ENCODE measurements at regions of chr12 and their contacts with region 1.

Region 1: GRCh38 chr12:43338848-43339526 is 213.0 kb downstream of the ADAMTS20 start:
- DNase-seq: peak; percentile 86
- H3K4me3 ChIP-seq: no peak overlapping the region
- H3K27ac ChIP-seq: peak overlapping the region; percentile 11
- H3K4me1 ChIP-seq: peaks cover 24% of the 10 kb centered on the region
- H3K27me3 ChIP-seq: no peaks in the 10 kb centered on the region
- CTCF ChIP-seq: peak; percentile 40 to 68
- POLR2A ChIP-seq: no peak

Region 2: DNA sequence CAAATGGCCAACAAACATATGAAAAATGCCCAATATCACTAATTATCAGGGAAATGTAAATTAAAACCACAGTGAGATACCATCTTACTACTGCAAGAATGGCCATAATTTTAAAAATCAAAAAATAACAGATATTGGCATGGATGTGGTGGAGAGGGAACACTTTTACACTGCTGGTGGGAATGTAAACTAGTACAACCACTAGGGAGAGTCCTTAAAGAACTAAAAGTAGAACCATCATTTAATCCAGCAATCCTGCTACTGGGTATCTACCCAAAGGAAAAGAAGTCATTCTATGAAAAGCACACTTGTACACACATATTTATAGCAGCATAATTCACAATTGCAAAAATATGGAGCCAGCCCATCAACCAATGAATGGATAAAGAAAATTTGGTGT is 1654.0 kb before region 1 on chr12:
- CTCF ChIA-PET with region 1: no interaction called
- POLR2A ChIA-PET with region 1: no interaction called
- dilution Hi-C with region 1: no loop called
- intact Hi-C with region 1: loop called (anchors 5 kb)
- DNase-seq: no peak
- H3K4me3 ChIP-seq: no peak overlapping the region
- H3K27ac ChIP-seq: no peak overlapping the region
- H3K4me1 ChIP-seq: no peaks in the 10 kb centered on the region
- H3K27me3 ChIP-seq: peaks cover 0 to 7% of the 10 kb centered on the region in 2 experiments
- CTCF ChIP-seq: no peak
- POLR2A ChIP-seq: no peak

Region 3: GRCh38 chr12:42237052-42237852 is 1101.7 kb before region 1 on chr12:
- CTCF ChIA-PET with region 1: no interaction called
- POLR2A ChIA-PET with region 1: no interaction called
- dilution Hi-C with region 1: no loop called
- intact Hi-C with region 1: loop called (anchors 5 kb)
- DNase-seq: peak; percentile 68
- H3K4me3 ChIP-seq: peak overlapping the region; percentile 39 to 98 (median 70)
- H3K27ac ChIP-seq: peak overlapping the region; percentile 41
- H3K4me1 ChIP-seq: peaks cover 13% of the 10 kb centered on the region
- H3K27me3 ChIP-seq: no peaks in the 10 kb centered on the region
- CTCF ChIP-seq: peak; percentile 29 to 53
- POLR2A ChIP-seq: no peak

Region 4: GRCh38 chr12:42332301-42333285 is 1006.4 kb before region 1 on chr12:
- CTCF ChIA-PET with region 1: interaction called, 7 read pairs
- POLR2A ChIA-PET with region 1: no interaction called
- dilution Hi-C with region 1: no loop called
- intact Hi-C with region 1: loop called (anchors 10 kb)
- DNase-seq: peak; percentile 67
- H3K4me3 ChIP-seq: no peak overlapping the region
- H3K27ac ChIP-seq: no peak overlapping the region
- H3K4me1 ChIP-seq: peaks cover 6% of the 10 kb centered on the region
- H3K27me3 ChIP-seq: no peaks in the 10 kb centered on the region
- CTCF ChIP-seq: peak; percentile 33 to 53
- POLR2A ChIP-seq: no peak

Region 5: DNA sequence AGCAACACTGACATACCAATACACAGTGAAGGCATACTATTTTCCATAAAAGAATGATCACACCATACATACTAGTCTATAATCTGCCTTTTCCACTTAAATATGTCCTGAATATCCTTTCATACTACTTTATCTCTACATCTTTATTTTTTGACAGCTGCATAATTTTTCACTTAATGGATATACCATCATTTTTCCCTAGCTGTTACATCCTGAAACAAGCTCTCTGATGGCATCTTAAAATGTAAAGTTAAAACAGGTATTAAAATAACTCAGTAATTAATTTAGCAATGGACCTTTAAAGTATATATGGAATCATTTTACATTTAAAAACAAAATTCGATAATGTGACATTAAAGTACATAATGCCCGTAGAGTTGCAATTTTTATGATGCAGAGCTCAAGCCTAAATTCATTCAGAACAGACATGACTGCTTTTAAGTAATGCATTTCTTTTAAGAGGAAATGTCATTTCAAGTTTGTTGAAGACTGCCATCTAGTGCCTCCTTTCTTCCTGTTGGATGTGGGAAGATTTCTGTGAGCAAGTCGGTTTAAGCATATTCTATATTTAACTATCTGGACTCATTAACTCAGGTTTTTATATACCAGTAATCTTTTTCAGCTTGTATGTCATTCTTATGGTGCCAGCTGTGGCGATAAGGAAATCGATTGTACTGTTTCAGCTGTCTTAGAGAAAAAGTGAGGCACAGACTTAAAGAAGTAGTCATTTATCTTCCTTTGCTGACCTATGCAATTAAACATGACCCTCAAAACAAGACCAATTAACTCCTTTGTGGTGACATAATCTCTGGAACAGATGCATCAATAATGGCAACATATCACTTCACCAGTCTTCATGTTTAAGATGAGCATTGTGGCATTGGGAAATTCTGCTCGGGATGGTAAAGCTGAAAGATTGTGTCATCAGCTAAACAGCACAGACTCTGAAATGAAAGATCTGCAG is 769.8 kb before region 1 on chr12:
- CTCF ChIA-PET with region 1: interaction called, 16 read pairs
- POLR2A ChIA-PET with region 1: no interaction called
- dilution Hi-C with region 1: no loop called
- intact Hi-C with region 1: loop called (anchors 5 kb)
- DNase-seq: peak; percentile 72
- H3K4me3 ChIP-seq: no peak overlapping the region
- H3K27ac ChIP-seq: no peak overlapping the region
- H3K4me1 ChIP-seq: peaks cover 33% of the 10 kb centered on the region
- H3K27me3 ChIP-seq: no peaks in the 10 kb centered on the region
- CTCF ChIP-seq: peak; percentile 29 to 35
- POLR2A ChIP-seq: no peak

Region 6: GRCh38 chr12:42790761-42791151 is 548.2 kb before region 1 on chr12:
- CTCF ChIA-PET with region 1: interaction called, 8 read pairs
- POLR2A ChIA-PET with region 1: no interaction called
- dilution Hi-C with region 1: no loop called
- intact Hi-C with region 1: loop called (anchors 2 kb)
- DNase-seq: peak; percentile 96
- H3K4me3 ChIP-seq: peak overlapping the region in 1 of 3 experiments; percentile 2
- H3K27ac ChIP-seq: peak overlapping the region; percentile 75
- H3K4me1 ChIP-seq: peaks cover 32% of the 10 kb centered on the region
- H3K27me3 ChIP-seq: no peaks in the 10 kb centered on the region
- CTCF ChIP-seq: no peak
- POLR2A ChIP-seq: peak; percentile 60

Region 7: GRCh38 chr12:43238281-43238680 is 100.7 kb before region 1 on chr12:
- CTCF ChIA-PET with region 1: interaction called, 3 read pairs
- POLR2A ChIA-PET with region 1: no interaction called
- dilution Hi-C with region 1: no loop called
- intact Hi-C with region 1: loop called (anchors 1 kb)
- DNase-seq: peak; percentile 99
- H3K4me3 ChIP-seq: no peak overlapping the region
- H3K27ac ChIP-seq: peak overlapping the region; percentile 95
- H3K4me1 ChIP-seq: peaks cover 54% of the 10 kb centered on the region
- H3K27me3 ChIP-seq: no peaks in the 10 kb centered on the region
- CTCF ChIP-seq: no peak
- POLR2A ChIP-seq: peak; percentile 94